PC-3 (cell line): ENCODE measurements at regions of chr19 and their contacts with region 1.

Region 1: GRCh38 chr19:16556525-16556924 is 14.3 kb upstream of the CHERP start:
- DNase-seq: no peak
- ATAC-seq: no peak
- H3K4me3 ChIP-seq: no peak overlapping the region
- H3K27ac ChIP-seq: no peak overlapping the region
- H3K4me1 ChIP-seq: no peaks in the 10 kb centered on the region
- H3K27me3 ChIP-seq: no peaks in the 10 kb centered on the region
- CTCF ChIP-seq: no peak

Region 2: DNA sequence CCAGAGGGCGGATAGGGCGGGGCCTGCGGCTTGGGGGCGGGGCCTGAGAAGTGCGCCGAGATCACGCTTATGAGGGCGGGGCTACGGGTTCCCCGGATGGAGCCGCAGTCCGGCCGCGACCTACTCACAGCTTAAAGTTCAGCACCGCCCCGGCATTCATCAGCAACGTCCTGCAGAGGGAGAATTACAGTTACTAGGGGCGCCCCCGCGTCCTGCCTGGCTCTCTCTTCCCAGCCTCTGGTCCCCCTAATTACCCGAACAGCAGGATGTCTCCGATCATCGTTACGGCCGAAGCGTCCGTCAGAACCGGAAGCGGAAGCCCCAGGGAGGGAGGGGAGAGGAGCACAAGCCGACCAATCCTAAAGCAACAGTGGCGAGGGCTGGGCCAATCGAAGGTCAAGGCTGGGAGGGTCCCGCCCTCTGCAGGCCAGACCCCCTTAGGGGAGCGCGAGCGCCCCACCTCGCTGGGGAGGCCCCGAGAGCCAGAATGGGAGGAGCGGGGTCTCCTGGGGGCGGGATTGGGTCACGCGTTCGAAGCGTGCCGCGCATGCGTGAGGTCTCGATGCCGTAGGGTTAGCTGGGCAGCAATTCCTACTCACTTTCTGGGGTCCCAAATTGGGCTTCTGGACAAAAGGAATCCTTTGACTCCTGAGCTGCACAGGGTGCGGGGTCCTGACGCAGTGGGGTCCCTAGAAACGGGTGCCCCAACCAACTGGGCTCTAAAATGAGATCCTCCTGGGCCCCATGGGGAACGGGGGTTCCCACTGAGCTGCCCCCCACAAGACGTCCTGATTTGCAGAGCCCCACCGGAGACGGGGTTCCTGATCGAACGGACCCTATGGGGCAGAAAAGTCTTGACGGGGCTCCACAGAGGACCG is 103.5 kb after region 1 on chr19 and contains the start of gene SMIM7:
- CTCF ChIA-PET with region 1: no interaction called
- POLR2A ChIA-PET with region 1: interaction called, 16 read pairs
- intact Hi-C with region 1: no loop called
- DNase-seq: peak; percentile 98
- ATAC-seq: peak; percentile 97
- H3K4me3 ChIP-seq: peak within 1 kb of the TSS; percentile 88
- H3K27ac ChIP-seq: peak within 1 kb of the TSS; percentile 77
- H3K4me1 ChIP-seq: peaks cover 8% of the 10 kb centered on the region
- H3K27me3 ChIP-seq: no peaks in the 10 kb centered on the region
- CTCF ChIP-seq: no peak; the same call in 1 of the 2 replicates
- total RNA-seq, gene SMIM7: 62.0 and 74.1 TPM in 2 replicates